ENCODE measurements at regions of chr9 and their contacts with region 1.

Region 1: GRCh38 chr9:72038890-72039410 is 21.5 kb downstream of the C9orf57 start:
- DNase-seq: peak; percentile 23
- H3K4me3 ChIP-seq: no peak overlapping the region
- H3K27ac ChIP-seq: no peak overlapping the region
- H3K4me1 ChIP-seq: no peaks in the 10 kb centered on the region
- H3K27me3 ChIP-seq: no peaks in the 10 kb centered on the region
- CTCF ChIP-seq: peak; percentile 90 to 99 (median 98)

Region 2: DNA sequence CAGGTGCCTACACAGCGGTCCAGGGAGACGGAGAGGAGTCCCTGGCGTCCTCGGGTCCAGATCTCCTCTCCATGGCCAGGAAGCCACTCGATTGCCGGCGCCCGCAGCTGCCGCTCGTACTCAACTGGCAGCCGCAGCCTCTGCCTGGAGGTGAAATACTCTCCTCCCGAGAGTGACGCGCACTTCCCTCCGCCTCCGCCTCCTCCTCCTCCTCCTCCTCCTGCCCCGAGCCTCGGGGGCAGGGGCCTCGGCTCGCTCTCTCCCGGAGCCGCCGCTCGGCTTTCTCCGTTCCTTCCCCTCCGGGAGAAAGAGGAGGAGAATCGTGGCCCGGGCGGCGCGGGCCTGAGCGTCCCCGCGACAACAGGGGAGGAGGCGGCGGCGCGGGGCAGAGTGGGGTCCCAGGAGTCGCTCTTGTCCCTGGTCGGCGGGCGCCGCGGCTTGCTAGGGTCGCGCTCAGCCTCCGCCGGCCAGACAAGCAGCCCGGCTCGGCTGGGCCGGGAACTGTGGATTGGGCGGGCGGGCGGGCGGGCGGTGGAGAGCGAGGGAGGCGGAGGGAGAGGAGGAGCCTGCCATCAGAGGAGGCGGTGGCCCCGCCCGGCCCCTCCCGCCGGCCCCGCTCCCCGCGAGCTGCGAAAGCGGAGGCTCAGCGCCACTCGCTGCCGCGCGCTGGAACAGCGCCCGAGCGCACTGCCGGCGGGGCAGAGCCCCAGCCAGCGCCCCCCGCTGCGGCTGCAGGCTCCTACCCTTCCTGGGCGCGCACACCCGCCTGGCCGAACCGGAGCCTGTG is 270.4 kb before region 1 on chr9 and contains the start of gene CEMIP2:
- dilution Hi-C with region 1: no loop called
- DNase-seq: no peak
- H3K4me3 ChIP-seq: peak within 1 kb of the TSS; percentile 87 to 100 (median 98)
- H3K27ac ChIP-seq: peak within 1 kb of the TSS; percentile 89
- H3K4me1 ChIP-seq: peaks cover 38% of the 10 kb centered on the region
- H3K27me3 ChIP-seq: no peaks in the 10 kb centered on the region
- CTCF ChIP-seq: peak; percentile 32 to 76 (median 56)
- polyA plus RNA-seq, gene CEMIP2: 47.7 to 79.4 TPM (median 48.7 TPM) in 3 replicates

Region 3: DNA sequence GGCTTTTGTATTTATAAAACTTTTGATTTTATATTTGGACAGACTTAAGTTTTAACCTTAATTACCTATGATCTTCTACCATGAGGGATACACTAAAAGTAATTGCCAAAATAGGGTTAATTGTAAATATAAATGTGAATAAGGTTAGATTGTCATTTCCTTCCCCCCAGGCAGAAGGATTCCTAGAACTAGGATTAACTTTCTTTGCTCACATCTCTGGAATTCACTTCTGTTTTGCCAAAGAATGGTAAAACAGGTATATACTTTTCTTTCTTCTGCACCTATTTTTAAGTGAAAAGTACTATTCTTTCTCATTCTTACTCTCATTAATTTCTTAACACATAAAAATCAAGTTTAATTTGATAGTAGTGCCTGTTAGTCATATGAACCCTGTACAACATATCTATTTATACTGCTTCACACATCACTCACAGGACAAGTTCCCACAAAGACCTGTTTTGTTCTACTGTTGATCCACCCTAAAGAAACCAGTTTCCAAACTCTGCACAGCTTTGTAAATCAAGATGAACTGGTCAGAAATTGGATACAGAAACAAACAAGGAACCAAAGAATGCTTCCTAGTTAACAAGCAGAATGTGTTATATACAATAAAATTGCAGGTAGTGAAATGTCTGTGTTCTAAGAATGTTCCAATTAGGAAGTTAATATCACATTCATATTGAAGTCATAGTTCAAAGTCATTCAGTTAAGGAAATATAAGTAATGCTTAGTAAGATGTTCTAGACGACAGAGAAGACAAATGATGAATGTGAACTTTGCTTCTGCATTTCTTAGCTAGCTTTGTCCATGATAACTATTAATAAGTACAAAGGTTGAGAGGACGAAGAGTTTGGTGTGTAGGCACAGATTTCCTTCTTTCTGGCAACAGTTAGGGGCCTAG is 94.2 kb before region 1 on chr9:
- dilution Hi-C with region 1: no loop called
- DNase-seq: no peak
- H3K4me3 ChIP-seq: peak overlapping the region in 2 of 3 experiments; percentile 6 to 26
- H3K27ac ChIP-seq: peak overlapping the region; percentile 81
- H3K4me1 ChIP-seq: peaks cover 26% of the 10 kb centered on the region
- H3K27me3 ChIP-seq: no peaks in the 10 kb centered on the region
- CTCF ChIP-seq: no peak

Region 4: DNA sequence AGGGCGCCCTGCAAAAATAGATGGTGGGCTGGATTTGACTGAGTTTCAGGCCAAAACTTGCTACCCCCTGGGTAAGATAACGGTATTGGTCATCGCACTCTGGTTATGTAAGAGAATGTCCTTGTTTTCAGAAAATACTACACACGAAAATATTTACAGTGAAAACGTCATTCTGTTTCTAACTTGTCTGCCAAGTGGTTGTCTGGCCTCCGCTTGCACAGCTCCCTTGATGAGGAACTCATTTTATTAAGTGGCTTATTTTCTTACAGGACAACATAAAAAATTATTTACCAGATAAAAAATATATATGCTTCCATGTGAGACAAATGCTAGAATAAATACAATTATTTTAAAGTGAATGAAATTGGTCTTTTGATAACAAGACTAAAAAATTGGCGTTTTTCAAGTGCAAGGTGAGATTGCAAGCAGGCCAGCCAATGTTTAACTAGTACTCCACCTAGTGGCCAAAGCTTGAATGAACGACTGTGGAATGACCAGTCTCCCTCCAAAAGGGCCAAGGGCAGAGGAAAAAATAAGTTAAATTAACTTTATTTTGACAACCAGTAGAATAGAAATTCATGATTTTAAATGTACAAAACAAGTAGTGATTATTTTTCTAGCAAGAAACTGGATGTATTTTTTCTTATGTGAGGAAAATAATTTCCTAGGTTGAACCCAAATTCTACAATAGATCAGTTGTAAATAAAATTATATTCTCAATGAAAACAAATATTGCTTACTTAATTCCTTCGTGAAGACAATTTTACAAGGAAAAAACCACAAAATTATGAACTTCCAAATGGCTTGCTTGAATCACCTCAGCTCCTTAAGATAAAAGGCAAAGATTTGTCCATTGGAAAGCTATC is 232.9 kb after region 1 on chr9:
- dilution Hi-C with region 1: loop called (anchors 25 kb)
- DNase-seq: no peak
- H3K4me3 ChIP-seq: no peak overlapping the region
- H3K27ac ChIP-seq: no peak overlapping the region
- H3K4me1 ChIP-seq: peaks cover 13% of the 10 kb centered on the region
- H3K27me3 ChIP-seq: no peaks in the 10 kb centered on the region
- CTCF ChIP-seq: peak; percentile 66 to 72 (median 69)

Measured in keratinocyte (primary cell).